ENCODE measurements at regions of chr15 and their contacts with region 1.

Region 1: GRCh38 chr15:99076552-99077308 is 28.1 kb upstream of the SYNM start:
- DNase-seq: peak; percentile 82
- H3K4me3 ChIP-seq: peak overlapping the region in 3 of 4 donors; percentile 32 to 40 (median 37)
- H3K27ac ChIP-seq: peak overlapping the region; percentile 48 to 61 (median 60)
- H3K4me1 ChIP-seq: no peaks in the 10 kb centered on the region
- H3K27me3 ChIP-seq: no peaks in the 10 kb centered on the region
- CTCF ChIP-seq: peak; percentile 80 to 86 (median 82)
- EP300 ChIP-seq: no peak
- POLR2A ChIP-seq: no peak

Region 2: GRCh38 chr15:98442379-98442833 is 634.3 kb before region 1 on chr15:
- intact Hi-C with region 1: loop called (anchors 2 kb)
- DNase-seq: no peak
- H3K4me3 ChIP-seq: no peak overlapping the region
- H3K27ac ChIP-seq: no peak overlapping the region
- H3K4me1 ChIP-seq: peaks cover 0 to 5% (median 0%) of the 10 kb centered on the region in 4 donors
- H3K27me3 ChIP-seq: no peaks in the 10 kb centered on the region
- CTCF ChIP-seq: peak; percentile 55 to 83 (median 77)
- EP300 ChIP-seq: no peak
- POLR2A ChIP-seq: no peak

Region 3: GRCh38 chr15:98518823-98519561 is 557.7 kb before region 1 on chr15:
- intact Hi-C with region 1: loop called (anchors 2 kb)
- DNase-seq: peak; percentile 78
- H3K4me3 ChIP-seq: no peak overlapping the region
- H3K27ac ChIP-seq: no peak overlapping the region
- H3K4me1 ChIP-seq: peaks cover 0 to 8% (median 0%) of the 10 kb centered on the region in 4 donors
- H3K27me3 ChIP-seq: no peaks in the 10 kb centered on the region
- CTCF ChIP-seq: peak; percentile 77 to 78 (median 77)
- EP300 ChIP-seq: no peak
- POLR2A ChIP-seq: no peak

Measured in sigmoid colon (tissue), 7 donors.